ENCODE measurements at regions of chr6 and their contacts with region 1.

Region 1: GRCh38 chr6:47733879-47734558 is 35.6 kb downstream of the ADGRF4 start:
- DNase-seq: no peak
- H3K4me3 ChIP-seq: no peak overlapping the region; a peak in 1 of 8 replicates
- H3K27ac ChIP-seq: no peak overlapping the region
- H3K4me1 ChIP-seq: peaks cover 4 to 18% (median 9%) of the 10 kb centered on the region in 4 experiments; a peak in 6 of 7 replicates
- H3K27me3 ChIP-seq: no peaks in the 10 kb centered on the region
- CTCF ChIP-seq: peak in 1 of 3 experiments; percentile 25; a peak in 2 of 4 replicates
- EP300 ChIP-seq: no peak
- POLR2A ChIP-seq: no peak
- RAD21 ChIP-seq: peak; percentile 37 to 39

Region 2: GRCh38 chr6:47710295-47710694 is 23.7 kb before region 1 on chr6:
- CTCF ChIA-PET with region 1: no interaction called
- POLR2A ChIA-PET with region 1: no interaction called
- DNase-seq: no peak
- H3K4me3 ChIP-seq: no peak overlapping the region
- H3K27ac ChIP-seq: no peak overlapping the region
- H3K4me1 ChIP-seq: no peaks in the 10 kb centered on the region
- H3K27me3 ChIP-seq: no peaks in the 10 kb centered on the region
- CTCF ChIP-seq: no peak
- EP300 ChIP-seq: no peak
- POLR2A ChIP-seq: no peak
- RAD21 ChIP-seq: no peak

Region 3: DNA sequence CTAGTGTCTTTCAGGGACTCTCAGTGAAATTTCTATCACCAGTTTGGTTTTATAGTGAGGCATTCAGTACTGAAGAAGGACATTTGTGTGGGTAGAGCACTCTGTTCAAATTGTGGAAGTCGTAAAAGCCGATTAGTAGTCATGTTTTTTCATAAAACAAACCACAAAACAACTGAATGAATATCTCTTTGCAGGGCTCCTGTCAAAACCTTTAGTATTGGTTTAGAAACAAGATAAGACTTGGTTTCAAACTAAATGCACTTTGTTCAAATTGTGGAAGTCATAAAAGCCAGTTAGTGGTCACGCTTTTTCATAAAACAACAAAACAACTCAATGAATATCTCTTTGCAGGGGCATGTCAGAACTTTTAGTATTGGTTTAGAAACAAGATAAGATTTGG is 11.8 kb before region 1 on chr6:
- CTCF ChIA-PET with region 1: interaction called, 20 read pairs
- POLR2A ChIA-PET with region 1: interaction called, 6 read pairs
- DNase-seq: no peak
- H3K4me3 ChIP-seq: no peak overlapping the region
- H3K27ac ChIP-seq: no peak overlapping the region
- H3K4me1 ChIP-seq: no peaks in the 10 kb centered on the region
- H3K27me3 ChIP-seq: no peaks in the 10 kb centered on the region
- CTCF ChIP-seq: no peak
- EP300 ChIP-seq: no peak
- POLR2A ChIP-seq: no peak
- RAD21 ChIP-seq: no peak

Region 4: GRCh38 chr6:47822856-47823554 is 89.0 kb after region 1 on chr6:
- CTCF ChIA-PET with region 1: no interaction called
- POLR2A ChIA-PET with region 1: no interaction called
- DNase-seq: no peak
- H3K4me3 ChIP-seq: no peak overlapping the region
- H3K27ac ChIP-seq: no peak overlapping the region
- H3K4me1 ChIP-seq: no peaks in the 10 kb centered on the region
- H3K27me3 ChIP-seq: no peaks in the 10 kb centered on the region
- CTCF ChIP-seq: no peak
- EP300 ChIP-seq: no peak
- POLR2A ChIP-seq: no peak
- RAD21 ChIP-seq: no peak

Measured in H1 (cell line).